Right ventricle myocardium superior (tissue), 1 donor: ENCODE measurements at regions of chr21 and their contacts with region 1.

Region 1: DNA sequence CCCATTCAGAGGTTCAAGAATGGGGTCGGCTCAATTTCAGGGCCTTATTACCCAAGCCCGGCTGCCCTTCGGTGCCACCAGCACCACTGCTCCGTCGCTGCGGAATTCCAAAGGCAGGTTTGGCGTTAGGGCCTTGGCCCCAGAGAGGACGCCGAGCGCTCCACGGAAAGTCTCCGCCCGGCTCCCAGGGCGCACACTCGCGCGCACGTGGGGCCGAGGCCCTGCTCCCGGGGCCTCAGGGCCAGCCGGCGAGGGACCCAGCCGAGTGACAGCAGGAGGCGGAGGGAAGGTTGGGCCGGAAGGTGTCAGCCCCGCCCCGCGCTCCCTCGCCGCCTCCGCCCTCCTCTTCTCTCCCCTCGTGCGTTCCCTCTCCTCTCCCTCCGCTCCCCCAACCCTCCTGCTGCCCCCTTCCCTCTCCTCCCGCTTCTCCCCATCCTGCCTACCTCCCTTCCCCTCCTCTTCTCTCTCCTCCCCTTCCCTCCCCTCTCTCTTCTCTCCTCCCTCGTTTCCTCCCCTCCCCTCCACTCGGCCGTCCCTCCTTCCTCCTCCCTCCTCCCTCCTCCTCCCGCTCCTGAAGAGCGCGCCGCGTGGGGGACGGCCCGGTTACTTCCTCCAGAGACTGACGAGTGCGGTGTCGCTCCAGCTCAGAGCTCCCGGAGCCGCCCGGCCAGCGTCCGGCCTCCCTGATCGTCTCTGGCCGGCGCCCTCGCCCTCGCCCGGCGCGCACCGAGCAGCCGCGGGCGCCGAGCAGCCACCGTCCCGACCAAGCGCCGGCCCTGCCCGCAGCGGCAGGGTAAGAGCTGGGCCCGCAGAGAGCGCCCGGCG is at the start of gene ETS2:
- DNase-seq: peak; percentile 95
- ATAC-seq: peak; percentile 91
- total RNA-seq, gene ETS2: 37.2 TPM

Region 2: GRCh38 chr21:38669176-38669575 is 136.4 kb before region 1 on chr21:
- intact Hi-C with region 1: no loop called
- DNase-seq: no peak
- ATAC-seq: no peak

Region 3: DNA sequence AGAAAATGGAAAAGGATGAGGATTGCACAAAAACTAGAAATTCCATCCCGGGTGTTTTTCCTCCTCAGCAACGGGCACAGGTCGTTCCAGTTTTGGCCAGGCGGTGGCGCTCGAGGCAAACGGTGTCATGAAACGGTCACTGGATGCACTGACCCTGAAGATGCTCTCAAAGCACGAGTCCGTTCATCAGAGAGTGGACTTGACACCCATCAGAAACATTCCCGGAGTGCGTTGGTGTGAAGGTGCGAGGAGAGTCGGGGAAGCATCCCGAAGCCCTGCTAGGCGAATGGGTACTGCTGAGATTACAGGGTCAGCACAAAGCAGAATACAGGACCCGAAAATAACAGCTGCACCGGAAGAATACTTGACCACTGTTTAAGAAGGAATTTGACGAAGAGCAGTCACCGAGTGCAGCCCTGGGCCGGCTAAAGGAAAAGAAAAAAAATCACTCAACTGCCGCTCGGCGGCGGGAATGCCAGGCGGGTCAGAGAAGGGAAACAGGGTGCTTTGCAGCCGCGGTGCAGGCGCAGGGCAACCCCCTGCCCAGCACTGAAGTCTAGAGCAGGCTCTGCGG is 71.5 kb before region 1 on chr21:
- intact Hi-C with region 1: loop called (anchors 10 kb)
- DNase-seq: peak; percentile 95
- ATAC-seq: peak; percentile 96

Region 4: DNA sequence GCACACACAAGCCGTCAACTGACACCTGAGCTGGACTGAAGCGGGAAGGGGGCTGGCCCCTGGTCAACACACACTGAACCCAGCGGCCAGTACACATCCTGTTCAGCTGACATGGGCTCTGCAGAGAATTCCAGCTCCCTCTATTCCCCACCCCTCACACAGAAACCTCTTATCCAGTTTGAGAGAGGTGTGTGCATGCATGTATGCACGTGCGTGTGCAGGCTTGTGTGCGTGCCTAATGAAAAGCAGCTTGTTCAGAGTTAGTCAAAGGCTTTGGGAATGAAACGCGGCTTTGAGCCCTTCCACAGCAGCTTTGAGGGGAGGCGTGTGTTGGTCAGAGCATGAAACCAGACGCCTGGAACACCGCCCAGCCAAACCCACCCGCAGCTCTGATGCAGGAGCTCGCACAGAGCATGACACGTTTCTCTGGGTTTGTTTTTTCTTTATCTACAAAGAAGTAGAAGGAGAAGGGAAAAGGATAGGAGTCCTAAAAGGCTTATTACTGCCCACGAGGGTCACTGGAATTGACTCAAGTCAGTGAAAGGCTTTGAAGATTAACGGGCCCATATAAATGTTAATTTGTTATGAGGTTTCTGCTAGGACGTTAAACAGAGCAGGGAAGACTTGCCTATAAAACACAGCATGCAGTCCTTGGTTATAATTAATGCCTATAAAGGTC is 184.3 kb after region 1 on chr21:
- intact Hi-C with region 1: loop called (anchors 5 kb)
- DNase-seq: peak; percentile 55
- ATAC-seq: peak; percentile 23

Region 5: GRCh38 chr21:39004634-39005501 is 199.3 kb after region 1 on chr21:
- intact Hi-C with region 1: no loop called
- DNase-seq: peak; percentile 83
- ATAC-seq: peak; percentile 71

Region 6: GRCh38 chr21:39088831-39089380 is 283.4 kb after region 1 on chr21:
- intact Hi-C with region 1: loop called (anchors 5 kb)
- DNase-seq: no peak
- ATAC-seq: peak; percentile 13

Region 7: GRCh38 chr21:39125752-39126485 is 320.4 kb after region 1 on chr21:
- intact Hi-C with region 1: loop called (anchors 2 kb)
- DNase-seq: no peak
- ATAC-seq: peak; percentile 94

Region 8: GRCh38 chr21:39217356-39218081 is 412.0 kb after region 1 on chr21:
- intact Hi-C with region 1: no loop called
- DNase-seq: no peak
- ATAC-seq: no peak